B cell (primary cell): ENCODE measurements at regions of chr11 and their contacts with region 1.

Region 1: GRCh38 chr11:61967116-61967923 is at the start of gene FTH1:
- DNase-seq: peak; percentile 95
- ATAC-seq: peak; percentile 67
- H3K4me3 ChIP-seq: peak within 1 kb of the TSS; percentile 88 to 99 (median 96)
- H3K4me3 Mint-ChIP-seq: peak within 1 kb of the TSS; percentile 97
- H3K27ac ChIP-seq: peak within 1 kb of the TSS; percentile 86 to 94
- H3K27ac Mint-ChIP-seq: peak within 1 kb of the TSS; percentile 99
- H3K4me1 ChIP-seq: peaks cover 58 to 67% of the 10 kb centered on the region in 2 donors
- H3K4me1 Mint-ChIP-seq: peaks cover 72% of the 10 kb centered on the region
- H3K27me3 ChIP-seq: no peaks in the 10 kb centered on the region
- H3K27me3 Mint-ChIP-seq: no peaks in the 10 kb centered on the region
- CTCF ChIP-seq: no peak
- total RNA-seq, gene FTH1: 1,265 and 1,314 TPM in 2 replicates

Region 2: DNA sequence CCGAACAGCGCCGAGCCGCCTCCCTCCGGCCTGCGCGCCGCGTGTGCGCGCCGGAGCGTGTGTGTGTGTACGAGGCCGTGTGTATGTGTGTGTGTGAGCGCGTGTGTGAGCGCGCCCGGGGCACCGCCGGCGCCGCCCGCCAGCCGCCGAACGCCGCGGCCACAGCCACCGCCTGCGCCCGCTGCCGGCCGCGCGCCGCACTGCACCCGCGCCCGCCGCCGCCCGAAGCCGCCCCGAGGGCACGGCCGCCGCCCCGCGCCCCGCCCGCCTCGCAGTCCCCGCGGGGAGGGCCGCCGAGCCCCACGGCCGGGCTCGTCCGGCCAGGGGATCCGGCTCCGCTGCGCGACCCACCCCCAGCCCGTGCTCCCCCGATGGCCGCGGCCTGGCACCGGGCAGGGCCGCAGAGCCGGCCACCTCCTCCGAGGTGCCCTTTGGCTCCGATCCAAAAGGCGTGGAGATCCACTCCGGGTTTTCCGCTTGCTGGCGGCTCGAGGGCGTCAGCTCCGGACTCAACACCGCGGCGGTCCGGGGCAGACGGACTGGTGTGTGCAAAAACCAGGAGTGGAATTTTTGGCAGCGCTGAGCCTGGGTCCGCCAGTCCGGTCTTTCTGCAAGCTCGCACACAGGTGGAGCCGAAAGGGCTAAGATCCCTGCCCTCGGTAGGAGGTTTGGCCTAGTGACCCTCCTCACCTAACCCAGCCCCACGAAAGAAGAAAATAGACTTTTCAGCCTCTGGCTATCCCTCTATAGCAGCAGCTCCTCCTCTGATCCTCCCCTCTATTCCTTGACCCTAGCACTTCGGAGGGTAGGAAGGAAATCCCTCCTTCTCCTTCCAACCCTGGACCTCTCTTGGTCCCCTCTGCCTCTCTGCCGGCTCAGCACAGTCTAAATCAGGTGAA is 386.0 kb before region 1 on chr11 and contains the start of gene SYT7:
- CTCF ChIA-PET with region 1: no interaction called
- POLR2A ChIA-PET with region 1: no interaction called
- intact Hi-C with region 1: loop called (anchors 5 kb)
- DNase-seq: peak; percentile 98
- ATAC-seq: peak; percentile 88
- H3K4me3 ChIP-seq: peak within 1 kb of the TSS in 4 of 5 experiments; percentile 11 to 57 (median 51)
- H3K4me3 Mint-ChIP-seq: peak within 1 kb of the TSS; percentile 88
- H3K27ac ChIP-seq: no peak within 1 kb of the TSS
- H3K27ac Mint-ChIP-seq: peak within 1 kb of the TSS; percentile 90
- H3K4me1 ChIP-seq: peaks cover 13 to 16% of the 10 kb centered on the region in 2 donors
- H3K4me1 Mint-ChIP-seq: peaks cover 18% of the 10 kb centered on the region
- H3K27me3 ChIP-seq: peaks cover 0 to 39% (median 17%) of the 10 kb centered on the region in 4 experiments
- H3K27me3 Mint-ChIP-seq: peaks cover 34% of the 10 kb centered on the region
- CTCF ChIP-seq: no peak
- total RNA-seq, gene SYT7: not detected in 2 replicates

Region 3: DNA sequence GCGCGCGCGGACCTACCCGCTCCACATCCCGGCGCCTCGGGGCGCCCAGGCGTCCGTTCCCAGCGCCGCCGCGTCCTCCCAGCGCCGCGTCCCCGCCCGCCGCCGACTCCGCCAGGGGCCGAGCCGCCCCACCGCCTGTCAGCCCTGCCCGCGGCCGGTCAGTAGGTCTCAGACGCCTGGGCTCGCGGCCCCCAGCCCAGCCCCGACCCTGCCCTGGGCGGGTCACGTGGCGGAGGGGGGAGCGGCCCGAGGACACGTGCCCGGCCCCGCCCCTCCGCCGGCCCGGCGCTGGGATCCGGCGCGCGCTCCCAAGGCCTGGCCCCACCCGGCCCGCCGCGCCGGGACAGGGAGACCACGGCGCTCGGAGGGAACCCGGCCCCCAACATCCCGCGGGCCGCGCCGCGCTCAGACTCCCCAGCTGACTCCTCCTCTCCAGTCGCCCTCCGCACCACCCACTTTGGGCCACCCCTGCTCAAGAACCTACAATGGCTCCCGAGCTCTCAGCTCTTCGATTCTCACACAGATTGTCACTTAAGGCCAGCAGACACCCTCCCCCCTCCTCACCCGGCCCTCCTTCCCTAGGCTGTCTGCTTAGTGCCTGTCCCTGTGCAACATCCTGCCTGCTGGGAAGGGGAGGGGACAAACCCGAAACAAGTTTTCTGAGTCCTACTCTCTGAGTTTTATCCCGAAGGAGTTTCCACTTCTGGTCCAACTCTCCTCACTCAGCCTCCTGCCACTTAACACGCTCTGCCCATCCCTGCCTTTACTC is 49.8 kb before region 1 on chr11 and contains the start of gene RAB3IL1:
- CTCF ChIA-PET with region 1: no interaction called
- POLR2A ChIA-PET with region 1: no interaction called
- intact Hi-C with region 1: no loop called
- DNase-seq: peak; percentile 33
- ATAC-seq: peak; percentile 39
- H3K4me3 ChIP-seq: peak within 1 kb of the TSS in 2 of 5 experiments; percentile 34 to 36
- H3K4me3 Mint-ChIP-seq: peak within 1 kb of the TSS; percentile 85
- H3K27ac ChIP-seq: no peak within 1 kb of the TSS
- H3K27ac Mint-ChIP-seq: no peak within 1 kb of the TSS
- H3K4me1 ChIP-seq: peaks cover 8 to 11% of the 10 kb centered on the region in 2 donors
- H3K4me1 Mint-ChIP-seq: peaks cover 14% of the 10 kb centered on the region
- H3K27me3 ChIP-seq: peaks cover 0 to 51% (median 20%) of the 10 kb centered on the region in 4 experiments
- H3K27me3 Mint-ChIP-seq: peaks cover 61% of the 10 kb centered on the region
- CTCF ChIP-seq: no peak
- total RNA-seq, gene RAB3IL1: 0.29 TPM in 1 of 2 replicates, not detected in the other

Region 4: GRCh38 chr11:62025487-62026105 is 58.3 kb after region 1 on chr11:
- CTCF ChIA-PET with region 1: interaction called, 6 read pairs
- POLR2A ChIA-PET with region 1: interaction called, 11 read pairs
- intact Hi-C with region 1: loop called (anchors 1 kb)
- DNase-seq: peak; percentile 93
- ATAC-seq: peak; percentile 83
- H3K4me3 ChIP-seq: peak overlapping the region in 3 of 5 experiments; percentile 6 to 30 (median 12)
- H3K4me3 Mint-ChIP-seq: peak overlapping the region; percentile 56
- H3K27ac ChIP-seq: peak overlapping the region; percentile 75 to 79
- H3K27ac Mint-ChIP-seq: peak overlapping the region; percentile 87
- H3K4me1 ChIP-seq: peaks cover 15 to 19% of the 10 kb centered on the region in 2 donors
- H3K4me1 Mint-ChIP-seq: peaks cover 23% of the 10 kb centered on the region
- H3K27me3 ChIP-seq: peaks cover 0 to 4% (median 0%) of the 10 kb centered on the region in 4 experiments
- H3K27me3 Mint-ChIP-seq: peaks cover 3% of the 10 kb centered on the region
- CTCF ChIP-seq: no peak

Region 5: GRCh38 chr11:62044639-62045121 is 77.4 kb after region 1 on chr11:
- CTCF ChIA-PET with region 1: interaction called, 3 read pairs
- POLR2A ChIA-PET with region 1: interaction called, 3 read pairs
- intact Hi-C with region 1: loop called (anchors 5 kb)
- DNase-seq: no peak
- ATAC-seq: no peak
- H3K4me3 ChIP-seq: no peak overlapping the region
- H3K4me3 Mint-ChIP-seq: no peak overlapping the region
- H3K27ac ChIP-seq: no peak overlapping the region
- H3K27ac Mint-ChIP-seq: no peak overlapping the region
- H3K4me1 ChIP-seq: peaks cover 22 to 29% of the 10 kb centered on the region in 2 donors
- H3K4me1 Mint-ChIP-seq: peaks cover 32% of the 10 kb centered on the region
- H3K27me3 ChIP-seq: peaks cover 0 to 4% (median 2%) of the 10 kb centered on the region in 4 experiments
- H3K27me3 Mint-ChIP-seq: peaks cover 12% of the 10 kb centered on the region
- CTCF ChIP-seq: no peak

Region 6: DNA sequence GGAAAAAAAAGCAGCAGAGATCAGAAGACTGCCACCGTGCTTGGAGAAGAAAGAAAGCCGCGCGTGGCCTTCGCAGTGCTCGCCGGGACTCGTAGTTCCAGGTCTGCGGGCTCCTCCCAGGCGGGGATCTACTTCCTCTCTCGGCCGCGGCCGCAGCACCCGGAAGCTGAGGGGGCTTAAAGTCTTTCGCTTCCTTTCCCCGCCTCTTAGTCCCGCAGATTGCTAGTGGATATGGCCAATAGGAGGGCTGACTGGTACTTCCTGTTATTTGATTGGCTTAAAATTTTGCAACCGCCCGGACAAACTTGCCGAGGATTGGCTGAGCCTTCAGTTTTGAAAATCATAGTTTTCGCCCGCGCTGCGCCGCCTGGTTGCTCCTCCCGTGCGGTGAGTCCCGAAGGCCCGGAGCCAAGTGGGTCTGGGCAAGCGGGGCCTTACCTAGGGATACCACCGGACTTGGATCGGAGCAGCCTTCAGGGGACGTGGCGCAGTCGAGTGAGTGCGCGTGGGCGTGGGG is 156.4 kb after region 1 on chr11 and contains the start of gene INCENP:
- CTCF ChIA-PET with region 1: no interaction called
- POLR2A ChIA-PET with region 1: interaction called, 7 read pairs
- intact Hi-C with region 1: loop called (anchors 1 kb)
- DNase-seq: peak; percentile 97
- ATAC-seq: peak; percentile 99
- H3K4me3 ChIP-seq: peak within 1 kb of the TSS; percentile 71 to 99 (median 93)
- H3K4me3 Mint-ChIP-seq: peak within 1 kb of the TSS; percentile 94
- H3K27ac ChIP-seq: peak within 1 kb of the TSS; percentile 52 to 67
- H3K27ac Mint-ChIP-seq: peak within 1 kb of the TSS; percentile 88
- H3K4me1 ChIP-seq: peaks cover 11 to 16% of the 10 kb centered on the region in 2 donors
- H3K4me1 Mint-ChIP-seq: peaks cover 30% of the 10 kb centered on the region
- H3K27me3 ChIP-seq: peaks cover 0 to 2% (median 0%) of the 10 kb centered on the region in 4 experiments
- H3K27me3 Mint-ChIP-seq: no peaks in the 10 kb centered on the region
- CTCF ChIP-seq: no peak
- total RNA-seq, gene INCENP: 34.0 and 37.8 TPM in 2 replicates

Region 7: DNA sequence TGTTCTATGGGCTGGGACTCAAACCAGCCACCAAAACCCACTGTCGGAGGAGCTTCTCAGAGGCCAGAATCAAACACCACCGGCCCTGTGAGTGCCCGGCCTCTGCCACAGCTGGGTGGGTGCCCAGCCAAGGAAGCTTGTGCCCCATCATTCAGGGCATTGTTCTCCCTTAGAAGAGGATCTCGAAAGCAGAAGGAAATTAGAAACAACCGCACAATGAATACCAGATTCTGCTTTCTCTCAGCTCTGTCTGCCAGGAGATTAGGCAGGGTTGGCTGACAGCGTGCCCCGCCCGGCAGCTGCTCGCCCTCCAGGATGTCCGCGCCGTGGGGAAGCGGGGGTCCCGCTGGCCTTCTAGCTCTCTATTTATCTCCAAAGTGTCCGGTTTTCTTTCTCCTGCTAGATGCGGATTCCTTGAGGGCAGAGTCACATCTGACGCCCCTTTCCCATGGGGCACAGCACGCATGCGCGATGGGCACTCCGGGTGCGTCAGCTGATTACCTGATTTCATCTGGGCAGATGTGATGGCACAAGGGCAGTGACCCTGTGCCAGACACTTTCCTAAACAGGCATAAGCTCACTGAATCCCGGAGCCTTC is 477.0 kb after region 1 on chr11:
- CTCF ChIA-PET with region 1: no interaction called
- POLR2A ChIA-PET with region 1: no interaction called
- intact Hi-C with region 1: no loop called
- DNase-seq: peak; percentile 85
- ATAC-seq: peak; percentile 88
- H3K4me3 ChIP-seq: peak overlapping the region in 4 of 5 experiments; percentile 30 to 66 (median 60)
- H3K4me3 Mint-ChIP-seq: peak overlapping the region; percentile 94
- H3K27ac ChIP-seq: peak overlapping the region; percentile 81 to 85
- H3K27ac Mint-ChIP-seq: peak overlapping the region; percentile 98
- H3K4me1 ChIP-seq: peaks cover 24 to 29% of the 10 kb centered on the region in 2 donors
- H3K4me1 Mint-ChIP-seq: peaks cover 29% of the 10 kb centered on the region
- H3K27me3 ChIP-seq: peaks cover 0 to 5% (median 0%) of the 10 kb centered on the region in 4 experiments
- H3K27me3 Mint-ChIP-seq: peaks cover 5% of the 10 kb centered on the region
- CTCF ChIP-seq: no peak